Caco-2 (cell line): ENCODE measurements at regions of chr15 and their contacts with region 1.

Region 1: DNA sequence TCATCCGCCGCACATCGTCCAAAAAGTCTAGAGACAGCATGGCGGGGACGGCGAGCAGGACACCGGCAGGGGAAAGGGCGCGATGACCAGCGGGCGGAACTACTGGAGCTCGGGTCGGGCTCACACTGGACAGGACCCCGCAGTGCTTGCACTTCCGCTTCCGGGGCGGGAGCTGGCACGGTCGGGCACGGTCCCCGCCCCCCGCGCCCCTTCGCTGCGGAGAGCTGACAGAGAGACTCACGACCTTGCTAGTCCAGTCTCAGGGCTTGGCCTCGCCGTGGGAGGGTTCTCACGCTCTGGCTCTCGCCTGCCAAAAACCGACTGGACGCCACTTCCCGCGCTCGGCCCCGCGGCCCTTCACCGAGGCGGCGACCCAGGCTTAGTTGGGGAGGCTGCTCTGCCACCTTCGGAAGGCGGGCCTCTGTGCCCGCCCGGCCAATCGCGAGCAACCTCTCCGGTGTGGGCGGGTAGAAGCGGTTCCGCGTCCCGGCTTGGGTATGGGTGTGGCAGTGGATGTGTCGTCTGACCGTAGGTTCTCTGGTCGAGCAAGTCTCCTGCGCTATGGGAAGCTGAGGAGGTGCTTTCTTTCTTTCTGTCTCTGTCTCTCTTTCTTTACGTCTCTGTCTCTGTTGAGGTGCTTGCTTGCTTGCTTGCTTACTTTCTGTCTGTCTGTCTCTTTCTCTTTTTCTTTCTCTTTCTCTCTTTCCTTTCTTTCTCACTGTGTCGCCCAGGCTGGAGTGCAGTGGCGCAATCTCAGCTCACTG is at the start of gene SEC11A:
- DNase-seq: peak; percentile 95 to 97
- H3K4me3 ChIP-seq: peak within 1 kb of the TSS; percentile 60
- H3K4me3 Mint-ChIP-seq: peak within 1 kb of the TSS; percentile 81
- H3K27ac Mint-ChIP-seq: peak within 1 kb of the TSS; percentile 87
- H3K4me1 ChIP-seq: peaks cover 5% of the 10 kb centered on the region
- H3K4me1 Mint-ChIP-seq: peaks cover 6% of the 10 kb centered on the region
- H3K27me3 ChIP-seq: no peaks in the 10 kb centered on the region
- H3K27me3 Mint-ChIP-seq: no peaks in the 10 kb centered on the region
- CTCF ChIP-seq: no peak
- total RNA-seq, gene SEC11A: 200 and 211 TPM in 2 replicates

Region 2: DNA sequence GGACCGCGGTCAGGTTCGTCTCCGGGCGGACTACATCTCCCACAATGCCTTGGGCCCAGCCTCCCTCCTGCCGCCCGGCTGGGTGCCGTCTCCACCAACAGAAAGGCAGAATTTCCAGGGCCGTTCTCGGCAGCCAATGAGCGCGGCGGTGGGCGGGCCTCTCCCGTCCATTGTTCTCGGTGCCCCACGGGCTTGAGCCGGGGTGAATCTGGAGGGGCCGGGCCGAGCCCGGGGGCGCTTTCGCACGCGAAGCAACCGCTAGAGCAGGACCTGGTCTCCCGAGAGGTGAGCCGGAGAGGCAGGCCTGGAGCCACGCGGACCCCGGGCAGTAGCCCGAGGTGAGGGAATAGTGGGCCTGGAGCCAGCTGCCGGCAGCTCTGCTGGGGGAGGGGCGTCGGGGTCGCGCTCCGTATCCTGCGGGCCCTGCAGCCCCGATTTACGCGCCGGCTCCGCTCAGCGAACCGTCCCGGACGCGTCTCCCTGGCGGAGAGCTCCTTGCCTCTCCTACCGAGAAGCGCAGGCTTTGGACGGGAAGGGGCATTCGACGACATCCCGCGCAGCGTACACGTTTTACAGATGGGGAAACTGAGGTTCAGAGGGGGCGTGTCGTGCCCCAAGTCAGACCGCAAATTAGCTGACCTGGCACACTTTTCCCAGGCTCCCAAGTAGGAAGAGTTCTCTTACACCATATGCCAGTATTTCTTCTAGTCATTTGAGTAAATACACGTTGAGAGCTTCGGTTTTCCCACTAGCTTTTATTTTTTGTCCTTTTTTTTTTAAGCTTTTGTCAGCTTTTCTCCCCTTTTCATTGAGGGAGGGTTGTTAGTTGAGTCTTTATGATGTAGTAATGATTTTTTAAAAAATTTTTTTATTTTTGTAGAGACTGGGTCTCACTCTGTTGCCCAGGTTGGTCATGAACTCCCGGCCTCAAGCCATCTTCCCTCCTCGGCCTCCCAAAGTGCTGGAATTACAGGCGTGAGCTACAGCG is 115.1 kb before region 1 on chr15 and contains the start of gene ZSCAN2:
- CTCF ChIA-PET with region 1: no interaction called
- POLR2A ChIA-PET with region 1: no interaction called
- intact Hi-C with region 1: loop called (anchors 10 kb)
- DNase-seq: peak; percentile 95 to 97
- H3K4me3 ChIP-seq: peak within 1 kb of the TSS; percentile 67
- H3K4me3 Mint-ChIP-seq: peak within 1 kb of the TSS; percentile 96
- H3K27ac Mint-ChIP-seq: peak within 1 kb of the TSS; percentile 86
- H3K4me1 ChIP-seq: peaks cover 12% of the 10 kb centered on the region
- H3K4me1 Mint-ChIP-seq: peaks cover 19% of the 10 kb centered on the region
- H3K27me3 ChIP-seq: no peaks in the 10 kb centered on the region
- H3K27me3 Mint-ChIP-seq: peaks cover 3% of the 10 kb centered on the region
- CTCF ChIP-seq: no peak
- total RNA-seq, gene ZSCAN2: 12.7 and 12.9 TPM in 2 replicates

Region 3: DNA sequence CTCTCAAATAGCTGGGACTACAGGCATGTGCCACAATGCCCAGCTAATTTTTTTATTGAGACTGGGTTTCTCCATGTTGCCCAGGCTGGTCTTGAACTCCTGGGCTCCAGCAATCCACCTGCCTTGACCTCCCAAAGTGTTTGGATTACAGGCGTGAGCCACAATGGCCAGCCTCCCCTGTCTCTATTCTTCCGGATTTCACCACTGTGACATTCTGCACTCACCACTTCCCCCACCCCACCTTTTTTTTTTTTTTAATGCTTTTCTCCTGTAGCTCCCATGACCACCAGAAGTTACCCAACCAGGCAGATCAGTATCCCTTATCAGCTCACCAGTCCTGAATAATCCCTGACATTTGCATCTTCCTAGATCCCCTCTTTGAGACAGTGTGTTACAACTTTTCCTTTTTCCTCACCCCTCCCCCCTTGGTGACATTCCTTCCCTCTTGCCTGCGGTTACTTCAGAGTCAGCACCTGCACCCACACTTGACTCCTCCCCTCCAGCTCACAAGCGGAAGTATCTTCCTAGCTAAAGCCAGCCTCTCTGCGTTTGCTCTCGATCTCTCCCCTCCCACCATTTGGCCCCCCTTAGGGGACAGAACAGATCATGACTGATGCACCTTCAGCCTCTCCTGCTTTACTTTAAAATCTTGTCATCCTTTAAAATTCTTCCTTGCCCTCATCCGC is 18.7 kb after region 1 on chr15:
- CTCF ChIA-PET with region 1: interaction called, 11 read pairs
- POLR2A ChIA-PET with region 1: interaction called, 60 read pairs
- intact Hi-C with region 1: loop called (anchors 1 kb)
- DNase-seq: peak; percentile 95
- H3K4me3 ChIP-seq: no peak overlapping the region; the same call in 1 of the 2 replicates
- H3K4me3 Mint-ChIP-seq: peak overlapping the region; percentile 66
- H3K27ac Mint-ChIP-seq: peak overlapping the region; percentile 94
- H3K4me1 ChIP-seq: peaks cover 27% of the 10 kb centered on the region
- H3K4me1 Mint-ChIP-seq: peaks cover 22% of the 10 kb centered on the region
- H3K27me3 ChIP-seq: no peaks in the 10 kb centered on the region
- H3K27me3 Mint-ChIP-seq: no peaks in the 10 kb centered on the region
- CTCF ChIP-seq: no peak

Region 4: GRCh38 chr15:84783496-84784251 is 67.5 kb after region 1 on chr15:
- CTCF ChIA-PET with region 1: interaction called, 3 read pairs
- POLR2A ChIA-PET with region 1: interaction called, 11 read pairs
- intact Hi-C with region 1: no loop called
- DNase-seq: no peak
- H3K4me3 ChIP-seq: no peak overlapping the region
- H3K4me3 Mint-ChIP-seq: no peak overlapping the region
- H3K27ac Mint-ChIP-seq: peak overlapping the region; percentile 22
- H3K4me1 ChIP-seq: no peaks in the 10 kb centered on the region
- H3K4me1 Mint-ChIP-seq: peaks cover 7% of the 10 kb centered on the region
- H3K27me3 ChIP-seq: no peaks in the 10 kb centered on the region
- H3K27me3 Mint-ChIP-seq: no peaks in the 10 kb centered on the region
- CTCF ChIP-seq: no peak